CD4-positive, alpha-beta T cell (primary cell): ENCODE measurements at regions of chr2 and their contacts with region 1.

Region 1: DNA sequence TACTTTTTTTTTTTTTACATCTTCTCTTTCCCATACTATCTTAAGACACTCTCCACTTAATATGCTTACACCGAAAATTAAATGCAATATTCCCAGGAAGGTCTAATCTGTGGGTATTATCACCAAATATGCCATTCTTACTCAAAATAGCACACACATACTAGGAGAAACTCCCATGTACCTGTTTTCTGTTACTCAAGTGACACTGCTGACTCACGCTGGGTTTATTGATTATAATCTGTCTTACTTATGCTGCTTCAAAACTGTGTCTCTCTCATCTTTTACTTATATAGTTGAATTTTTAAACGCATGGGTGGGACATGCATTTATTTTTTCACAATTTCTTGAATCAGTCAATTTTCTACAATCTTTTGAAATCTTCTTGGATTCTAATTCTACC is 29.9 kb downstream of the MRPL19 start:
- DNase-seq: no peak
- ATAC-seq: no peak
- H3K4me3 ChIP-seq: no peak overlapping the region
- H3K4me3 Mint-ChIP-seq: no peak overlapping the region
- H3K27ac ChIP-seq: no peak overlapping the region
- H3K27ac Mint-ChIP-seq: no peak overlapping the region
- H3K4me1 ChIP-seq: no peaks in the 10 kb centered on the region
- H3K4me1 Mint-ChIP-seq: peaks cover 6% of the 10 kb centered on the region
- H3K27me3 ChIP-seq: no peaks in the 10 kb centered on the region
- H3K27me3 Mint-ChIP-seq: no peaks in the 10 kb centered on the region
- CTCF ChIP-seq: no peak

Region 2: DNA sequence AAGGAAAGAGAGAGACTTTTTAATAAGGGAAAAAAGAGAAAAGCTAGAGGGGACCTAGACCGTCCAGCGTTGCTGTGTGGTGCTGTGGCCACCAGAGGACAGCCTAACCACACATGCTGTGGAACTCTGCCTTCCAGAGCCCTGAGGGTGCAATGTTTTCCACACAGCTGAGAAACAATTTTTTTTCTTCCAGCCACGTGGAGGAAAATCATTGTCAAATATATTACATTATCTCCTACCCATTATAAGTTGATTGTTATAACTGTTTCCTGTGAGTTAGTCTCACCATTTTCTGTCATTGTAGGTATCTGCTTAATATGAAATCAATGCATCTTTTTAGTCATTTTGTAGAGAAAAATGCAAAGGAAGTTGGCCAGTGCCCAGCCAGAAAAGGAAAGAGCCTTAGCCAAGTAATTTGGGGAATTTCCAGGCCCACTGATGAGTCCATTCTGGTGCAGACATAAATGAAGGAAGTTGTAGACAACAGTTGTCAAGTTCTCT is 35.8 kb before region 1 on chr2:
- CTCF ChIA-PET with region 1: interaction called, 14 read pairs
- POLR2A ChIA-PET with region 1: no interaction called
- intact Hi-C with region 1: loop called (anchors 1 to 2 kb)
- DNase-seq: peak; percentile 16 to 66 (median 36)
- ATAC-seq: peak; percentile 99
- H3K4me3 ChIP-seq: no peak overlapping the region
- H3K4me3 Mint-ChIP-seq: no peak overlapping the region
- H3K27ac ChIP-seq: no peak overlapping the region
- H3K27ac Mint-ChIP-seq: no peak overlapping the region
- H3K4me1 ChIP-seq: no peaks in the 10 kb centered on the region
- H3K4me1 Mint-ChIP-seq: no peaks in the 10 kb centered on the region
- H3K27me3 ChIP-seq: peaks cover 0 to 9% of the 10 kb centered on the region in 2 experiments
- H3K27me3 Mint-ChIP-seq: peaks cover 26% of the 10 kb centered on the region
- CTCF ChIP-seq: peak; percentile 98